Heart left ventricle (tissue), 16 donors: ENCODE measurements at regions of chrX and their contacts with region 1.

Region 1: DNA sequence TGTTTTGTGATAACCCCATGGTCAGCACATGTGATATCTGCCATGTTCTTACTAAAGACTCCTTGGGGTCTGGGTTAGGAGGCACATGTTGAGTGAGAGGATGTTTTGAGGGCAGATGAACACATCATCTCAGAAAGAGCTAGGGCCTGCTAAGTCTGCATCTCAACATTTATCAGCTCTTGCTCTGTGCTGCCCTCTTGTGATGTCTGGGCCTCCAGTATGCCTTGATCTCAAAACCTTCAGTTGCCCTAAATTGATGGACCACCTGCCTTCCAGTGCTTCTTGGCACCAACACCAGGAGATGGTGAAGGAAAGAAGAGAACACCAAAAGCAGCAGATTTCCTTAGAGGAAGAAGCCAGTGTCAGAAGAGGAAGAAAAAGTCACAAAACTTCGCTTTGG is 22.5 kb downstream of the MID1 start:
- DNase-seq: peak in 1 of 5 donors; percentile 22
- ATAC-seq: peak in 3 of 4 donors; percentile 40 to 51 (median 45)
- H3K4me3 ChIP-seq: no peak overlapping the region
- H3K27ac ChIP-seq: peak overlapping the region in 4 of 12 donors; percentile 36 to 46 (median 40)
- H3K4me1 ChIP-seq: peaks cover 0 to 10% (median 0%) of the 10 kb centered on the region in 12 donors
- H3K27me3 ChIP-seq: no peaks in the 10 kb centered on the region
- CTCF ChIP-seq: peak in 11 of 12 donors; percentile 12 to 57 (median 41)
- POLR2A ChIP-seq: no peak

Region 2: DNA sequence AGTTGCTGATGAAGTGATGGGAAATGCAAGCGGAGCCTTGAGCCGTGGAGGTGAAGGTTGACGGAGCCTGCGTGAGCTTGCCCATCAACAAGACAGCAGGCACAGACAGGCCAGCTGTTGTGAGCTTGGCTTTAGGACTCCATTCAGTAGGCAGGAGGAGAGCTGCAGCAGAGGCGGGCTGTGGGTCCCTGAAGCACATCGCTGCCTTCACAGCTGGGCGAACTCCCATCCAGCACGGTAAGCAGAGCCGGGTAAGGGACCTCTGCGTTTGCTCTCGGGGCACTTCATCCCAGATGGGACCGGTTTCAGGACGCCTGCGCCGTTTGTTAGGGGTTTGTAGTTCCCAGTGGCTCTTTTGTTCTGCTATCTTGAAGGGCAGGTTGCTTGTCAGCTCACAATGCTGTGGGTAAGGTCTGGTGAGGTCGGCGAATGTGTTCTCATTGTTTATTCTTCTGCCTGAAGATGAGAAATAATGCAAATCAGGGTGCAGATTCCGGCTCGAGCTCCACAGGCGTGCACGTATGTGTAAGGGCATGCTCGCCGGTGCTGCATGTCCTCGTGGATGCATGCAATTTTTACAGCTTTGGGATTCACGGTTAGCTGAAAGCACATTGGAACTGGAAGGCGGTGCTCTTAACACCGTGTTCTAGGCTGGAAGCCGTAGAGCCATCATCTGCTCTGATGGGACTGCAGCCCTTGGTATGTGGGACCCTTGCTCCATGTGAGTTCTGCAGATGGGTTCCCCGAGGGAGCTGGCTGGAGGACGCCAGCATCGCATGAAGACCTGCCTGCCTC is 685.3 kb before region 1 on chrX:
- intact Hi-C with region 1: no loop called
- DNase-seq: no peak
- ATAC-seq: no peak
- H3K4me3 ChIP-seq: no peak overlapping the region
- H3K27ac ChIP-seq: no peak overlapping the region
- H3K4me1 ChIP-seq: peaks cover 0 to 3% (median 0%) of the 10 kb centered on the region in 12 donors
- H3K27me3 ChIP-seq: peaks cover 0 to 38% (median 0%) of the 10 kb centered on the region in 9 donors
- CTCF ChIP-seq: no peak
- POLR2A ChIP-seq: no peak

Region 3: DNA sequence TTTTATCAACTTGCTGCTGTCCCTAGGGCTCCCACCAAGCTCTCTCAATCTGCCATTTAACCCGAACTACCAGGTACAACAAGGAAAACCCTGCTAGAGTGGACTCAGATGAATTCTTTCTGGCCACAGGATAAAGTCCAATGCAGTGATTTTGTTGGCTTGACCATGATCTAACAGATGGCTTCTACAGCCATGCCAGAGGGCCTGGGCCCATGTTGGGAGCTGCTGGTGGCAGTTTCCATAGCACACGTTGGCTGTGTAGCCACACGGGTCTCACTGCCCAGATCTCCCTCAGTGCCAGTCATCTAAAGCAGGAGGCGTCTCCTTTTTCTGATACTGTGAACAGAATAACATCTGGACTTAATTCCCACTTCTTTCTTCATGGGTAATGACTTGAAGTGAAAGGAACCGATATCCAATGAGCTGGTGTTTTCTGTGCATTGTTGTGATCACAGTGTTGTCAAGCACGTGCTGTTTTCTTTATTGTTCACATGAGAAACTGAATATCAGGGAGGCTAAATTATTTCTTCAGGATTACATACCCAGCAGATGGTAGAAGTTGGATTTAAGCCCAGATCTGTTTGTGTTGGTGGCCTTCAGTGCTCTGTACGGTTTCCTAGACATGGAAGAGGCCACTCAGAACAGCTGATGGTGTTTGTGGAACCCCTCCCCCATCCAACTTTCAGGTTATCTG is 526.3 kb before region 1 on chrX:
- intact Hi-C with region 1: no loop called
- DNase-seq: no peak
- ATAC-seq: peak in 1 of 4 donors; percentile 34
- H3K4me3 ChIP-seq: no peak overlapping the region
- H3K27ac ChIP-seq: no peak overlapping the region
- H3K4me1 ChIP-seq: peaks cover 0 to 12% (median 4%) of the 10 kb centered on the region in 12 donors
- H3K27me3 ChIP-seq: no peaks in the 10 kb centered on the region
- CTCF ChIP-seq: no peak
- POLR2A ChIP-seq: no peak

Region 4: DNA sequence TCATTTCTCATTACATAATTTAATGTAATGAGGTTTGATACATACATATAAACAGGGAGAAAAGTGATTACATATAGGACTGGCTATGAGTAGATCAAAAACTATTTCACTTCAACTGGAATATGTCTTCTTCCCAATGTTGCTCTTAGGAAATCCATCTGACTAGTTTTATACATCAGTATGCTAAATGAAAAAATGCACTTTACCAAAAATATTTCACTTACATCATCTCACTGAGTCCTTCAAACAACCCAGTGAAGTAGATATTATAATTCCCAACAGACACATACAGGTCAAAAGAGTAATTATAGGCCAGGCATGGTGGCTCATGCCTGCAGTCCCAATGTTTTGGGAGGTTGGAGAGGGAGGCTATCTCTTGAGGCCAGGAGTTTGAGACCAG is 193.4 kb before region 1 on chrX:
- intact Hi-C with region 1: no loop called
- DNase-seq: no peak
- ATAC-seq: no peak
- H3K4me3 ChIP-seq: no peak overlapping the region
- H3K27ac ChIP-seq: no peak overlapping the region
- H3K4me1 ChIP-seq: no peaks in the 10 kb centered on the region
- H3K27me3 ChIP-seq: no peaks in the 10 kb centered on the region
- CTCF ChIP-seq: no peak
- POLR2A ChIP-seq: no peak

Region 5: GRCh38 chrX:10469900-10470408 is 127.9 kb before region 1 on chrX:
- intact Hi-C with region 1: loop called in 1 of 10 experiments (anchors 10 kb)
- DNase-seq: no peak
- ATAC-seq: no peak
- H3K4me3 ChIP-seq: no peak overlapping the region
- H3K27ac ChIP-seq: no peak overlapping the region
- H3K4me1 ChIP-seq: peaks cover 0 to 9% (median 0%) of the 10 kb centered on the region in 12 donors
- H3K27me3 ChIP-seq: no peaks in the 10 kb centered on the region
- CTCF ChIP-seq: no peak
- POLR2A ChIP-seq: no peak

Region 6: DNA sequence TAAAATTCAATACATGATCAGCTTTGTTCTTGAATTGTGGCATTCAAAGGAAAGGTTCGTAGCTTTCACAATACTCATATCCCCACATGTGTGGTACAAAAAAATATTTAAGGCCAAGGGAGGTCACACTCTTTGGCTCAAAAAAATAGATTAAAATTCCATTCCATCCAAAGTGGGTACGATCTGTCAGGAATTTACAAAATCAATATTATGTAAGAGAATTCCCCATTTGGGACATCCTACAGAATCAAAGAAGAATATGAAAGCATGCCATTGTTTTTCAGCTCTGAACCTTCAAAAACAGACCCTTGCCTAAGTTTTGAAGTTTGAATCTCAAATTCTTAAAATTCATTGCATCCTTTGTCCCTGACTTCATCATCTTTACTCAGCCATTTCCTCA is 63.3 kb before region 1 on chrX:
- intact Hi-C with region 1: no loop called
- DNase-seq: no peak
- ATAC-seq: no peak
- H3K4me3 ChIP-seq: no peak overlapping the region
- H3K27ac ChIP-seq: no peak overlapping the region
- H3K4me1 ChIP-seq: peaks cover 0 to 5% (median 0%) of the 10 kb centered on the region in 12 donors
- H3K27me3 ChIP-seq: no peaks in the 10 kb centered on the region
- CTCF ChIP-seq: no peak
- POLR2A ChIP-seq: no peak